MCF 10A (cell line): ENCODE measurements at regions of chr16 and their contacts with region 1.

Region 1: DNA sequence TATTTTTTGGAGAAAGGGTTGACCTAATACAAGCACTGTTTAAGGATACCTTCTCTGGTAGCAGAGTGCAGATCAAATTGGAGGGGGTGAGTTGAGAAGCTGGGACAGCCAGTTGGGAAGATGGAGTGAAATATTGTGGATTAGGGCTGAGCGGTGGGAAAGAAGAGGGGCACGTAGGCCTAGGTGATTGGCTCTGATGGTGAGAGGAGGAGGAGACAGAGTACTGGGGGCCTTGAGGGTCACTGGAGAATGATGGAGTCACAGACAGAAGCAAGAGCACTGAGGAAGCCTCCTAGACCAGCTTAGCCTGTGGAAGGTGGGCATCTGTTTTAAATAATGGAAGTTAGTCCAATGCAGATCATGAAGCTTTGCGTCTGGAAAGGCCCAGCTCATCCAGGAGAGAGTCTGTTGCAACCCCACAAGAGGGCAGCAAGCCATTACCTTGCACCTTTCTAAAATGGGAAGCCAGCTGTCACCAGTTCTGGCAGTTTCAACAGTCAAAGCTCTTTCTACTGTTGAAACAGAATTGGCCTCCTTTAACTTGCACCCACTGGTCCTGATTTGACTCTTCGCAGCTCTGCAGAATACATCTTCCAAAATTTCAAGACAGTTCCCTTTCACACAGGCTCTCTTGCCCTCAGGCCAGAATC is 11.8 kb downstream of the SLC9A5 start:
- DNase-seq: peak; percentile 67
- H3K4me3 Mint-ChIP-seq: no peak overlapping the region
- H3K27ac Mint-ChIP-seq: no peak overlapping the region
- H3K4me1 Mint-ChIP-seq: no peaks in the 10 kb centered on the region
- H3K27me3 Mint-ChIP-seq: peaks cover 19% of the 10 kb centered on the region
- CTCF ChIP-seq: peak; percentile 69

Region 2: DNA sequence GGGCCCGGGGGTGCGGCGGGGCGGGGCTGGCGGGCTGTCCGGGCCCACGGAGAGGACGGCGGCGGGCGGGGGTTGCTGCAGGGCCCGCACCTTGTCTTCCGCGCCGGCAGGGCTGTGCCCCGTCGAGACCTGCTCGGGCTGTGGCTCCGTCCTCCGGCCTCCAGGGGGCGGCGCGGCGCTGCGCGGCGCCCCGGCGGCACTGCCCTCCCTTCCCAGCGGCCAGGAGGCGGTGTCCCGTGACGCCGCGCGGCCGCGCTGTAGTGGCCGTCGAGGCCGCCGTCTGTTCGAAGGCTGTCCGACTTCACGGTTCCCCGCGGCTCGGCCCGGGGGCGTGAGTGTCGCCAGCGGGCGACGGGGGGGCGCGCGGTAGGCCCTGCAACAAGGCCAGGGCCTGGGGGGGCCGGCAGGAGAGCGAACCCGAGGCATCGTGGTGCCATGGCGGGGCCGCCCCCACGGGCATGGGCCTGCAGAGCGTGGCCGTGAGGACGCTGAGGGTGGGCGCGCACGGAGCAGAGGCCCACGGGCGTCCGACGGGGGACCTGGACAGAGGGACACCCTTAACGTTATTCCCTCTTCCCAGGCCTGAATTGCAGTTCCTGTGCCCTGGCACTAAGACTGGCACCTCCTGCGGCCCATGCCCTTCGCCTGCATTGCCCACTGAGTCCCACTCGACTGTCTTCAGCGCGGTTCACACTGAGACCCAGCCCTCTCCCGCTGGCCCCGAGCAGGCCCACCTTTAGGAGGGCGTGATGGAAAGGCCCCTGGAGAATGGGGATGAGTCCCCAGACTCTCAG is 18.9 kb after region 1 on chr16 and contains the start of gene PLEKHG4:
- CTCF ChIA-PET with region 1: interaction called, 37 read pairs
- POLR2A ChIA-PET with region 1: interaction called, 7 read pairs
- intact Hi-C with region 1: no loop called
- DNase-seq: peak; percentile 78
- H3K4me3 Mint-ChIP-seq: peak within 1 kb of the TSS; percentile 74
- H3K27ac Mint-ChIP-seq: peak within 1 kb of the TSS; percentile 74
- H3K4me1 Mint-ChIP-seq: peaks cover 33% of the 10 kb centered on the region
- H3K27me3 Mint-ChIP-seq: no peaks in the 10 kb centered on the region
- CTCF ChIP-seq: peak; percentile 76
- total RNA-seq, gene PLEKHG4: 30.4 and 32.7 TPM in 2 replicates

Region 3: GRCh38 chr16:67339453-67339852 is 78.9 kb after region 1 on chr16:
- CTCF ChIA-PET with region 1: interaction called, 14 read pairs
- POLR2A ChIA-PET with region 1: interaction called, 3 read pairs
- intact Hi-C with region 1: loop called (anchors 1 kb)
- DNase-seq: peak; percentile 23
- H3K4me3 Mint-ChIP-seq: no peak overlapping the region
- H3K27ac Mint-ChIP-seq: no peak overlapping the region
- H3K4me1 Mint-ChIP-seq: no peaks in the 10 kb centered on the region
- H3K27me3 Mint-ChIP-seq: no peaks in the 10 kb centered on the region
- CTCF ChIP-seq: peak; percentile 24

Region 4: DNA sequence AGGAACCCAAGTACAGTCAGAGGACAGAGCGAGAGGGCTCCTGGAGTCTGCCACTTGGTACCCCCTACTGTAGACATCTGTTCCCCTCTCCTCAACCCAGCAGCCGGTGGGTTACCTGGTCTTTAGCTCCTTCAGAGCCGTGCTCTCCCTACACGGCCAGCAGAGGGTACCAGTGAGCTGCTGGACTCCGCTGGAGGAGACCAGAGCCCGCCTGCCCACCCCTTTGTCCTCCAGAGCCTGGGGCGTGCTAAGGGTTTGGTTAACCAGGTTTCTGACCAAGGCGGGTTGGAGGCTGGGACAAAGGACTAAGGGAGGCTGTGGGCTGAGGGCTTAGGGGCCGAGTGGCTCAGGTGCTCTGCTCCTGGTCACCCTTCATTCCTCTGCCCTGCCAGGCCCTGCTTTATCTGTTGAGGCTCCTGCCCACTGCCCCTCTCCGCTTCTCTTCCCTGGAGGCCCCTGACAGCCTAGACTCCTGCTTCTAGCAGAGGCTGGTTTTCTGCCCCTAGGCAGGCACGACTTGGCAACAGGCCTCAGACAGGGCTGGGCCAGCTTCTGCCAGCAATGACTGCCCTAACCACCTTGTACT is 167.7 kb after region 1 on chr16:
- CTCF ChIA-PET with region 1: interaction called, 13 read pairs
- POLR2A ChIA-PET with region 1: no interaction called
- intact Hi-C with region 1: no loop called
- DNase-seq: peak; percentile 73
- H3K4me3 Mint-ChIP-seq: no peak overlapping the region
- H3K27ac Mint-ChIP-seq: no peak overlapping the region
- H3K4me1 Mint-ChIP-seq: peaks cover 14% of the 10 kb centered on the region
- H3K27me3 Mint-ChIP-seq: peaks cover 12% of the 10 kb centered on the region
- CTCF ChIP-seq: peak; percentile 81

Region 5: GRCh38 chr16:67461600-67462592 is 201.3 kb after region 1 on chr16:
- CTCF ChIA-PET with region 1: interaction called, 11 read pairs
- POLR2A ChIA-PET with region 1: no interaction called
- intact Hi-C with region 1: loop called (anchors 2 kb)
- DNase-seq: no peak
- H3K4me3 Mint-ChIP-seq: no peak overlapping the region
- H3K27ac Mint-ChIP-seq: peak overlapping the region; percentile 39
- H3K4me1 Mint-ChIP-seq: peaks cover 28% of the 10 kb centered on the region
- H3K27me3 Mint-ChIP-seq: no peaks in the 10 kb centered on the region
- CTCF ChIP-seq: no peak